AG04450 (cell line): ENCODE measurements at regions of chr6 and their contacts with region 1.

Region 1: DNA sequence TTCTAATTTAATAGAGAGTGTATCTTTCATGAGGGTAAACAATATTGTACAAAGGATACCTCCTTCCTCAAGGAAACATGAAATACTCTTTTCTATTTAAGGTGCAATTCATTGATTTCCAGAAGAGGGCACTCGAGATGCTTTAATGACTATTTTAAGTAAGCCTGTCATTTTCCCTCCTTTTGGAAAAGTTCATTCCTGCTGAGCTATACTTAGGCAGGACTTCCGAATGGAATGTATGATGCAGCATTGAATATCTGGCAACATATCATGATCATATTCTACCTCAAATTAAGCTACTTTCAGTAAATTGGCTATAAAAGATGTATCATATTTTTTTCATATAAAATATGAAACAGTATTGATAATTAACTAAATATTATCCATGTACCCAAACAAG is 5.0 kb downstream of the DST start:
- DNase-seq: peak; percentile 54
- H3K4me3 ChIP-seq: no peak overlapping the region
- H3K27ac ChIP-seq: no peak overlapping the region
- H3K27me3 ChIP-seq: no peaks in the 10 kb centered on the region
- CTCF ChIP-seq: peak; percentile 61

Region 2: DNA sequence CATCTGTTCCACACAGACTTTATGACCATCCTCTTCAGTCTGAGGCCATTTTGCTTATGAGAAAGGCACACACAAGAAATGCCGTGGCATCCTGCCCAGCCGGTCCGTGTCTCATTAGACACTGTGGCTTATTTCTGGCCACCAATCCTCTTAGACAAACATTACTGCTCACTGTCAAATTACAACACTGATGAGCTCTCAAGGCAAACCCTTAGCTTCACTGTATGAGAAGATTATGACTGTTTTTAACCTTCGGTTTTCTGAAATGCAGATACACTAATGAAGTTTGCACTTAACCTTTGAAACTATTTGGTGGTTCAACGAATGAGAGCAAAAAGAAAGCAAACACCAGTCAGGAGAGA is 55.6 kb after region 1 on chr6:
- CTCF ChIA-PET with region 1: interaction called, 73 read pairs
- POLR2A ChIA-PET with region 1: interaction called, 3 read pairs
- DNase-seq: no peak
- H3K4me3 ChIP-seq: peak overlapping the region; percentile 29; the same call in 1 of the 2 replicates
- H3K27ac ChIP-seq: peak overlapping the region; percentile 93
- H3K27me3 ChIP-seq: no peaks in the 10 kb centered on the region
- CTCF ChIP-seq: no peak

Region 3: GRCh38 chr6:56757588-56757984 is 119.9 kb after region 1 on chr6:
- CTCF ChIA-PET with region 1: interaction called, 22 read pairs
- POLR2A ChIA-PET with region 1: no interaction called
- DNase-seq: no peak
- H3K4me3 ChIP-seq: no peak overlapping the region
- H3K27ac ChIP-seq: peak overlapping the region; percentile 58
- H3K27me3 ChIP-seq: no peaks in the 10 kb centered on the region
- CTCF ChIP-seq: peak; percentile 56

Region 4: DNA sequence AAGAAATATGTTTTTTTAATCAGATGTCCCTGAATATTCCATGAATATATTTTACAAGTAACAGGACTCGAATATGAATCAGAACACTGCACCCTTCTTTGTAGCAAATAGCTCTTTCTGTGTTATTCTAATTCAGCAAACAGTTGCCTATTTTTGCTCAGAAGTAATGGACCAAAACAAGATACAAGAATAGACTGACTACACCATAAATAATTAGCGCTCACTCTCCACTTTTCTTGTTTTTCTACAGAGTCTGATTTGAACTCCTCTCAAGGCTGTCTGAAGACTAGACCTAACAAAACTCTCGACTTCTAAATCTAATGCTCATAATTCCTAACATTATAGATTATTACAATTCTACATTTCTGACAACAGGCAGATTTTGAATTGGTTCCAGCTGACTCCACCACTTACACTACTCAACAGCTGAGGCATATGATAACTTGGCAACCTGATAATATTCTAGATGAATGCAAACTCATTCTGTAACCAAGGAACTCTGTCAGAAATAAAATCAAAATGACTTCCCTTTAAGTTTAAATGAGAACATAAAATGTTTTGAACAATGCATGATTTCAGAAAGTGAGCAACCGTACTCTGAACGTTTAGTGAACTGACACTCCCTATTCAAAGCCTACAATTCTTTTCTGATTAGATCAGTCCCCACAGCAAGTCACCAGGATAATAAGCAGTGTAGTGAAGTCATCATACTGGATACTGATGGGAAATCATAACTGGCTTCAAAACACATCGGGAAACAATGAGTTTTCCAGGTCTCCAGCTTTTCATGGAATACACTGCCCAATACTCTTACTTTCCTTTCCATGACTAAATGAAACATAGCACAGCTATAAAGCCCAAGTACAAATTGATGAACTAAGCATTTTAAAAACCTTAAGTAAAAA is 203.1 kb after region 1 on chr6:
- CTCF ChIA-PET with region 1: interaction called, 10 read pairs
- POLR2A ChIA-PET with region 1: no interaction called
- DNase-seq: no peak
- H3K4me3 ChIP-seq: peak overlapping the region; percentile 80
- H3K27ac ChIP-seq: no peak overlapping the region
- H3K27me3 ChIP-seq: no peaks in the 10 kb centered on the region
- CTCF ChIP-seq: no peak